ENCODE measurements at regions of chr5 and their contacts with region 1.

Region 1: DNA sequence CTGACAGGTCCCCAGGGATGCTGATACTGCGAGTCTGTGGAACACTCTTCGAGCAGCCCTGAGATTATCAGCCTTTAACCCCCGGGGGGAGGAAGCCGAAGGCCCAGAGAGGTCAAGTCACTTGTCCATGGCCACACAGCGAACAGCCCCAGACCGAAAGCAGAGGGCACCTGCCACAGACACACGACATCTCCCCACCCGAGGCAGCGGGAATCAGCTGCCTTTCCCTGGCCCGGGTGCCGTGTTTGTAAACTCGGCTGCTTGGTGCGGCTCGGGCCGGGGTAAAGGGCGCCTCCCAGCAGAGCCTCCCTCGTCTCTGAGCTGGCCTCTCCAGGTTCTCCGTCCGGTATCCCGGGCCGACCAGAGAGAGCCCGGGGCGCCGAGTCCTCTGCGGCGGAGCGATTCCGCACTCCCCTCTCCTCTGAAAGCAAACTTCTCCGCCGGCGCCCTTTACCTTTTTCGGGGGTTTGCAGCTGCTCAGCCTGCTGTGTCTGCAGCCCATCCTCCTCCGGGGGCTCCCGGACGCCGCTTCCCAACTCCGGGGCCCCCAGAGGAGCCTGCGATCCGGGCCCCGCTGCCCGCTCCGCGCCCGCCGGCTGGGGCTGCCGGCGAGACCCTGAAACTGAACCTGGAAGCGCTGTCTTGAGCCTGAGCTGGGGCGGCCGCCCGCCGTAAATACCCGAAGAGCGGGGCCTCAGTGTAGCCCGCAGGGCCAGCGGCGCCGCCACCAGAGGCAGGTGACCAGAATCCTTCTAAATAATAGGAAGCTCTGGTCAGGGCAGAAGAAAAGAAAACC is at the start of gene CCDC69:
- DNase-seq: peak; percentile 58
- H3K4me3 Mint-ChIP-seq: peak within 1 kb of the TSS; percentile 82
- H3K27ac Mint-ChIP-seq: peak within 1 kb of the TSS; percentile 88
- H3K4me1 Mint-ChIP-seq: peaks cover 52% of the 10 kb centered on the region
- H3K27me3 Mint-ChIP-seq: no peaks in the 10 kb centered on the region
- total RNA-seq, gene CCDC69: 79.4 to 84.1 TPM

Region 2: GRCh38 chr5:151157426-151158286 is 66.0 kb before region 1 on chr5 and contains the start of gene ANXA6:
- CTCF ChIA-PET with region 1: no interaction called
- POLR2A ChIA-PET with region 1: no interaction called
- DNase-seq: peak; percentile 62
- H3K4me3 Mint-ChIP-seq: peak within 1 kb of the TSS; percentile 96
- H3K27ac Mint-ChIP-seq: peak within 1 kb of the TSS; percentile 96
- H3K4me1 Mint-ChIP-seq: peaks cover 46% of the 10 kb centered on the region
- H3K27me3 Mint-ChIP-seq: no peaks in the 10 kb centered on the region
- total RNA-seq, gene ANXA6: 494 to 508 TPM

Region 3: DNA sequence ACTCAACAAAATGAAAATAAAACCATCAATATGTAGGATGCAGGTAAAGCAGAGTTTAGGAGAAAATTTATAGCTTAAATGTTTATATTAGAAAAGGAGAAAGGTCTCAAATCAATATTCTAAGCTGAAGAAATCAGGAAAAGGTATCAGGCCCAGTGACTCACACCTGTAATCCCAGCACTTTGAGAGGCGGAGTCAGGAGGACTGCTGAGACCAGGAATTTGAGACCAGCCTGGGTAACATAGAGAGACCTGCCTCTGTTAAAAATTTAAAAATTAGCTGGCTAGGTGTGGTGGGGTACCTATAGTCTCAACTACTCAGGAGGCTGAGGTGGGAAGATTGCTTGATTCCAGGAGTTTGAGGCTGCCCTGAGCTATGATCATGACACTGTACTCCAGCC is 32.0 kb before region 1 on chr5:
- CTCF ChIA-PET with region 1: no interaction called
- POLR2A ChIA-PET with region 1: no interaction called
- DNase-seq: no peak
- H3K4me3 Mint-ChIP-seq: no peak overlapping the region
- H3K27ac Mint-ChIP-seq: no peak overlapping the region
- H3K4me1 Mint-ChIP-seq: peaks cover 30% of the 10 kb centered on the region
- H3K27me3 Mint-ChIP-seq: no peaks in the 10 kb centered on the region

Region 4: GRCh38 chr5:151239237-151239861 is 15.7 kb after region 1 on chr5:
- CTCF ChIA-PET with region 1: interaction called, 13 read pairs
- POLR2A ChIA-PET with region 1: interaction called, 4 read pairs
- DNase-seq: peak; percentile 61
- H3K4me3 Mint-ChIP-seq: no peak overlapping the region
- H3K27ac Mint-ChIP-seq: no peak overlapping the region
- H3K4me1 Mint-ChIP-seq: peaks cover 41% of the 10 kb centered on the region
- H3K27me3 Mint-ChIP-seq: no peaks in the 10 kb centered on the region

Region 5: DNA sequence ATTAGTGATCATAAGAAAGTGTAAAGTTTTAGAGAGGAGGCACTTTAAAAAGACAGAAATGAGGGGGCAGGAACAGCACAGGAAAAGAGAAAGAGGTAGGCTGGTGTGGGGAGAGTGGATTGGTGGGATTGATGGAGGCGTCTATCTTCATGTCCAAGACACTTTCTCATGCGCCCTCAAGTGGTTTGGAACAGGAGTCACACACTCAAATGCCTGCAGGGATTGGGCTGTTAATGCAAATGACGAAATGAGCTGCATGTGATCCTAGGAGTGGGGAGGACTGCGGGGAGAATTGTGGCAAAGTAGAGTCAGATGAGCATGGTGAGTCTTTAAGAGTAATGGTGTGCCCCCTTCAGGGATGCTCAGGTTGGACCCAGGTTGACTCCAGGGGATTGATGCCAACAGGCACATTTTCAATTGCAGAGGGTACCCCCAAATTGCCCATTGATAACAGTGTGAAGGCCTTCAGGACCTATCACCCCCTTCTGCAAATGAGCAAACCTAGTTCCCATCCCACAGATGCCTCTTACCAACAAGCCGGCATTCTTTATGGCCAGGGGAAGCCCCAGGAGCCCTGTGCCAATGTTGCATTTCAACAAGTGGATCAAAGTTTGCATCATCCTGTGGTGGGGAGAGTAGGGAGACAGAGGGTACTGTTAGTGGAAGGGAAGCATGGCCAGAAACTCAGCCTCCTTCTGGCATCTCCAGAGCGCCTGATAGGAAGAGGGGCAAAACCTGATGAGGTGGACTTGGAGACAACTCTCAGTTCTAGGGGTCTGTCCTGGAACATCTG is 74.6 kb after region 1 on chr5:
- CTCF ChIA-PET with region 1: no interaction called
- POLR2A ChIA-PET with region 1: no interaction called
- DNase-seq: no peak
- H3K4me3 Mint-ChIP-seq: no peak overlapping the region
- H3K27ac Mint-ChIP-seq: no peak overlapping the region
- H3K4me1 Mint-ChIP-seq: peaks cover 5% of the 10 kb centered on the region
- H3K27me3 Mint-ChIP-seq: peaks cover 7% of the 10 kb centered on the region

Measured in activated CD4-positive, alpha-beta T cell treated with anti-CD3 and anti-CD28 coated beads, Interleukin-2, amount 10 ng/mL, durations not matched to agents 7 days and 5 days (primary cell).